Activated CD4-positive, alpha-beta T cell treated with anti-CD3 and anti-CD28 coated beads, Interleukin-2, amount 10 ng/mL, durations not matched to agents 7 days and 5 days (primary cell): ENCODE measurements at regions of chr11 and their contacts with region 1.

Region 1: GRCh38 chr11:76207642-76208401 is 1.5 kb upstream of the WNT11 start:
- DNase-seq: peak; percentile 73
- H3K4me3 Mint-ChIP-seq: peak overlapping the region; percentile 66
- H3K27ac Mint-ChIP-seq: no peak overlapping the region
- H3K4me1 Mint-ChIP-seq: peaks cover 21% of the 10 kb centered on the region
- H3K27me3 Mint-ChIP-seq: peaks cover 74% of the 10 kb centered on the region

Region 2: GRCh38 chr11:76131671-76132631 is 75.9 kb before region 1 on chr11:
- CTCF ChIA-PET with region 1: no interaction called
- POLR2A ChIA-PET with region 1: no interaction called
- DNase-seq: no peak
- H3K4me3 Mint-ChIP-seq: no peak overlapping the region
- H3K27ac Mint-ChIP-seq: peak overlapping the region; percentile 37
- H3K4me1 Mint-ChIP-seq: peaks cover 22% of the 10 kb centered on the region
- H3K27me3 Mint-ChIP-seq: no peaks in the 10 kb centered on the region

Region 3: GRCh38 chr11:76177250-76177686 is 30.6 kb before region 1 on chr11:
- CTCF ChIA-PET with region 1: no interaction called
- POLR2A ChIA-PET with region 1: no interaction called
- DNase-seq: no peak
- H3K4me3 Mint-ChIP-seq: no peak overlapping the region
- H3K27ac Mint-ChIP-seq: no peak overlapping the region
- H3K4me1 Mint-ChIP-seq: no peaks in the 10 kb centered on the region
- H3K27me3 Mint-ChIP-seq: no peaks in the 10 kb centered on the region

Region 4: GRCh38 chr11:76194872-76195668 is 12.8 kb before region 1 on chr11:
- CTCF ChIA-PET with region 1: interaction called, 23 read pairs
- POLR2A ChIA-PET with region 1: no interaction called
- DNase-seq: no peak
- H3K4me3 Mint-ChIP-seq: no peak overlapping the region
- H3K27ac Mint-ChIP-seq: no peak overlapping the region
- H3K4me1 Mint-ChIP-seq: no peaks in the 10 kb centered on the region
- H3K27me3 Mint-ChIP-seq: no peaks in the 10 kb centered on the region

Region 5: DNA sequence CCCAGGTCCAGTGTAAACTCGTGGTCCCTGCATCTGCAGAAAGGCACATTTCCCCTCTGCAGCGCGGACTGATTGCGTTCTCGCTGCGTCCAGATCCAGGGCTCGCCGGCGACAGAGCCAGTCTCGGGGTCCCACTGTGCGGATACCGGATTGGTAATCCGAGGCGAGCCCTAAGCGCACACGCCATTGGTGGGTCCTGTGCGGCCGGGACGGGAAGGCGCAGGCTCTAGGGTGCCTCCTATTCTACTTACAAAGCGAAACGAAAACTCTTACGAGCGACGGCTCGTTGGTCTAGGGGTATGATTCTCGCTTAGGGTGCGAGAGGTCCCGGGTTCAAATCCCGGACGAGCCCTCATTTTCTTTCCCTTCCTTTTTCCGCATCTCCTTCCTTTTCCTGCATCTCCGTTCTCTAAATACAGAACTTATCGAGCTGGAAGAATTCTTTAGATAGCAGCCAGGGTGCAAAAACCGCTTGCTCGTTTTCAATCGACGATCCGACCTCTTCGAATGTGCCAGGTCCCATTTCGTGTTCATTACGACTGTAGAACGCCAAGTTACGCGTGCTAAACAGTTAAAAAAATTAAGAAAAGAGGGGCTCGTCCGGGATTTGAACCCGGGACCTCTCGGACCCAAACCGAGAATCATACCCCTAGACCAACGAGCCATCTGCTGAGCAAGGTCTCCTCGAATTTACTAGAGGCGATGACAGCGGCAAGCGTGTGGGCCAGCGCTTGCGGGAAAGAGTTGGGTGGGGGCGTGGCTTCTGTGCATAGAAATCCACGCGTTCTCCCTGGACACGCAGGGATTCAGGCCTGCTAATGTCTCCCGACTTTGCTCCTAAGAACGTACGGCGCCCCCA is 27.6 kb after region 1 on chr11:
- CTCF ChIA-PET with region 1: interaction called, 34 read pairs
- POLR2A ChIA-PET with region 1: no interaction called
- DNase-seq: peak; percentile 89
- H3K4me3 Mint-ChIP-seq: peak overlapping the region; percentile 75
- H3K27ac Mint-ChIP-seq: peak overlapping the region; percentile 94
- H3K4me1 Mint-ChIP-seq: peaks cover 58% of the 10 kb centered on the region
- H3K27me3 Mint-ChIP-seq: peaks cover 15% of the 10 kb centered on the region

Region 6: DNA sequence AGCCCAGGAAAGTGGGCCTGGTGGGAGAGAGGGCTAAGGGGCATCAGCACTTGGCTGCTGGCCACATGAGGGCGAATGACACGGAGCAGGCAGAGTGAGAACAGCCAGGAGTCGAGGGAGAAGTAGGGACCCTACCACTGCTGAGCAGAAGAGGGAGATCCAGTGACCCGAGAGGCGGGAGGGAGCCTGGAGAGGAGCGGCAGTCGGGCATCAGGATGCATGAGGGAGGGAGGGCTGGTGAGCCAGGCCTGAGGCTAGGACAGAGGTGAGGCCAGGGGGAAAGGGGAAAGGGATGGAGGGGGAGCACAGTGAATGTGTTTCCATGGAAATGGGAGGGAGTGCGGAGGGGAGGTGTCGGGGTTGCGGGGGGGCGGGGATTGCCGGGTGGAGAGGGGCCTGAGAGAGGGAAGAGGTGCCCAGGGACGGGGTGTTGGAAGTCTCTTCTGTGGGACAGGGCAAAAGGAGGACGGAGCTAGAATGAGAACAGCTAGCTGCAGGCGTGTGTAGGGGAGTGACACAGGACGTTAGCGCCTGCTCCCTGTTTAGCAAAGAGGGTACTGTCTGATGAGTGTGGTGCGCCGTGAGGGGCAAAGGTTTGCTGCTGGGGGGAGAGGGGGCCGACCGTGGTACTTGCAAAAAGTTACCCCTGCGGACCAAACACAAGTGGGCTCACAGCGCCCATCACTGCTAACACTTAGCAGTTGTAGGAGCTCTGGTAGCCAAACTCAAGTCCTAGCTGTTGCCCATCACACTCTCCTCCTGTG is 35.6 kb after region 1 on chr11:
- CTCF ChIA-PET with region 1: interaction called, 11 read pairs
- POLR2A ChIA-PET with region 1: no interaction called
- DNase-seq: no peak
- H3K4me3 Mint-ChIP-seq: no peak overlapping the region
- H3K27ac Mint-ChIP-seq: no peak overlapping the region
- H3K4me1 Mint-ChIP-seq: no peaks in the 10 kb centered on the region
- H3K27me3 Mint-ChIP-seq: peaks cover 7% of the 10 kb centered on the region

Region 7: DNA sequence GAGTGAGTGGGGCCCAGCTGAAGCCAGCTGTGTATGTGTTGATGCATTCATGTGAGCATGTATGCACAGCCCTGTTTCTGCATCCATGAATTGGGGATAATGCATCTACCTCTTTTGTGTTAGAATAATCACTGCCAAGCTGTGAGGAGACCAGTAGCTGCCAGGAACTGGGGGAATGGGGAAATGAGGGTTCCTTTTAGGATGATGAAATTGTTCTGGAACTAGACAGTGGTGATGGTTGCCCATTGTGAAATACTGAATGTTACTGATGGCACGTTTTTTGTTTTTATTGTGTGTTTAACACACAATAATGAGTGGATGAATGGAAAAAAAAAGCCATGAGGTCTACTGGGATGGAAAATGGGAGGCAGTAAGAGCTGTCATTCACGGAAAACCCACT is 43.8 kb after region 1 on chr11:
- CTCF ChIA-PET with region 1: interaction called, 22 read pairs
- POLR2A ChIA-PET with region 1: no interaction called
- DNase-seq: no peak
- H3K4me3 Mint-ChIP-seq: no peak overlapping the region
- H3K27ac Mint-ChIP-seq: no peak overlapping the region
- H3K4me1 Mint-ChIP-seq: no peaks in the 10 kb centered on the region
- H3K27me3 Mint-ChIP-seq: peaks cover 7% of the 10 kb centered on the region

Region 8: DNA sequence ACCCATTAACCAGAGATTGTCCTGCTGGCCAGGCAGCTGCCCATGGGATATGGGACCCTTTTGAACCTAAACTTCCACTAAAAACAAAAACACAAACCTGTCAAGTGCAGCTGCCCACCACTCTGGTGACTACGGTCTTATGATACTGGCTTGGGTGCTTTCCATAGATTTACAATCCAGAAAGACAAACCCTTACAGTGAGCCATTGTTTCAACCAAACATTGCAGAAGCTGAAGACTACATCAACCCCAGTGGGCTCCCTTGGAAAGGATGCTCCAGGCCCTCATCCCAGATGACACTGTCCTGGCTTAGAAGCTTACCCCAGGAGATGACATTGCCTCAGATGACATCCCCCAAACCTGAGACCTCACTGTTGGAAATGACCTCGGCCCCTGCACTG is 55.3 kb after region 1 on chr11:
- CTCF ChIA-PET with region 1: no interaction called
- POLR2A ChIA-PET with region 1: no interaction called
- DNase-seq: no peak
- H3K4me3 Mint-ChIP-seq: no peak overlapping the region
- H3K27ac Mint-ChIP-seq: no peak overlapping the region
- H3K4me1 Mint-ChIP-seq: no peaks in the 10 kb centered on the region
- H3K27me3 Mint-ChIP-seq: peaks cover 6% of the 10 kb centered on the region

Region 9: DNA sequence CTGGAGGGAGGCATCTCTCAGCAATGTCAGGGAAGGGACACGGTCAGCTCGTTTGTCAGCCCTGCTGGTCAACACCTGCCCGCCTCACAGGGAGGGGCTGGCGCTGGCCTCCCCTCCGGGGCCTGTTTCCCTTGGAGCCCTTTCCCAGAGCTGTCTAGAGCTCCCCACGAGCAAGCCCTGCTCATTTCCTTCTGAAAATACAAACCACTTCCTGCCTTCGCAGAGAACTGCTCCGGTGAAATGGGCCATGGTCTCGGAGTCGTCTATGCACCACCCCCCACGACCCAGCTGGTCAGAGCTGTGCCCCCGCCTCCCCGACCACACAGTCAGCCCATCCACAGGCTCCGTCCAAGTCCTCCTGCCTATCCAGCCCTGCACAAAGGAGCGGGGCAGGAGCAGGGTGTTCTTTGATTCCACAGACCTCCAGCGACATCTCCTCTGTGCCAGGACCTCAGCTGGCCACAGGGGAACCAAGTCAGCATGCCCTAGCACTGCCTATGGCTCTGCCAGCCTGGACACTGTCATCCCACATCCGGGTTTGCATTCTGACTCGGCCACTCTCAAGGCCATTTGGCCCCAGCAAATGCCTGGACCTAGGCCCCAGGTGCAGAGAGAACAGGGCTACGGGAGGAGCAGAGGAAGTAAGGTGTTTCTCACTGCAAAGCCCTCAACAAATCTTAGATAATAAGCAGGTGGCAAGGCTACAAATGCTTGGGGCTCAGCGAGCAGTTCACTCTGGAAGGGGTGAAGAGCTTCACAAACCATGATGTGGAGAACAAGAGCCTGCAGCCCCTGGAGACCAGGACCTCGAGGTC is 80.6 kb after region 1 on chr11:
- CTCF ChIA-PET with region 1: interaction called, 11 read pairs
- POLR2A ChIA-PET with region 1: no interaction called
- DNase-seq: peak; percentile 41
- H3K4me3 Mint-ChIP-seq: peak overlapping the region; percentile 26
- H3K27ac Mint-ChIP-seq: peak overlapping the region; percentile 88
- H3K4me1 Mint-ChIP-seq: peaks cover 30% of the 10 kb centered on the region
- H3K27me3 Mint-ChIP-seq: no peaks in the 10 kb centered on the region

Region 10: GRCh38 chr11:76318744-76319384 is 111.0 kb after region 1 on chr11:
- CTCF ChIA-PET with region 1: interaction called, 100 read pairs
- POLR2A ChIA-PET with region 1: no interaction called
- DNase-seq: peak; percentile 86
- H3K4me3 Mint-ChIP-seq: no peak overlapping the region
- H3K27ac Mint-ChIP-seq: no peak overlapping the region
- H3K4me1 Mint-ChIP-seq: peaks cover 14% of the 10 kb centered on the region
- H3K27me3 Mint-ChIP-seq: peaks cover 37% of the 10 kb centered on the region

Region 11: GRCh38 chr11:76369406-76369805 is 161.6 kb after region 1 on chr11:
- CTCF ChIA-PET with region 1: no interaction called
- POLR2A ChIA-PET with region 1: no interaction called
- DNase-seq: no peak
- H3K4me3 Mint-ChIP-seq: no peak overlapping the region
- H3K27ac Mint-ChIP-seq: no peak overlapping the region
- H3K4me1 Mint-ChIP-seq: peaks cover 27% of the 10 kb centered on the region
- H3K27me3 Mint-ChIP-seq: no peaks in the 10 kb centered on the region